Heart left ventricle (tissue), 16 donors: ENCODE measurements at regions of chr9 and their contacts with region 1.

Region 1: DNA sequence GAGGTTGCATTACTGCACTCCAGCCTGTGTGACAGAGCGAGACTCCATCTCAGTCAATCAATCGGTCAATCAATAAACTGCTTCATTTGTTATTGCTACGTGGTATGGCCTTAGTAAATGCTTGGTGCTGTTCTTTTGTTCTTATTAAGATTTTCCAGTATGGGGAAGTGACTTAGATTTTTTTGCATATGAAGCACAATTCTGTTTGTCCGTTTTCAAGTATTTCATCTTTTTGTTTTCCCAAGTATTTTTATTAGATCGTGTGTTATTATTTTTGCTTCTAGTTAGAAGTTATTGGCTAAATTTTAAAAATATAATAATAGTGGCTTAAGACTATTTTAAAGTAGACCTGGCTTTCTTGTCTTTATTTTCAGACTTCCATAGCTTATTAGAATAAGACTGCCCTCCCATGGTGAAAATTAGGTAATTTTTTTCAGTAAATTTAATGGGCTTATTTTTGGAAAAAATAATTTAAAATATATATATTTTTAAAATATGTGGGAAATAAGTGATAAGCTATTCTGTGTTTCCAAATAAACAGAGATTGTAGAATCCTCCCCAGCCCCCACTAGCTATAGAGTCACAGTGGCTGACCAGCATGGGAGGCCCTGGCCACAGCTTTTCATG is 14.7 kb upstream of the OMD start:
- DNase-seq: no peak
- ATAC-seq: no peak
- H3K4me3 ChIP-seq: peak overlapping the region in 1 of 12 donors; percentile 3
- H3K27ac ChIP-seq: no peak overlapping the region
- H3K4me1 ChIP-seq: peaks cover 0 to 7% (median 0%) of the 10 kb centered on the region in 12 donors
- H3K27me3 ChIP-seq: no peaks in the 10 kb centered on the region
- CTCF ChIP-seq: peak in 11 of 12 donors; percentile 18 to 57 (median 46)
- POLR2A ChIP-seq: no peak

Region 2: DNA sequence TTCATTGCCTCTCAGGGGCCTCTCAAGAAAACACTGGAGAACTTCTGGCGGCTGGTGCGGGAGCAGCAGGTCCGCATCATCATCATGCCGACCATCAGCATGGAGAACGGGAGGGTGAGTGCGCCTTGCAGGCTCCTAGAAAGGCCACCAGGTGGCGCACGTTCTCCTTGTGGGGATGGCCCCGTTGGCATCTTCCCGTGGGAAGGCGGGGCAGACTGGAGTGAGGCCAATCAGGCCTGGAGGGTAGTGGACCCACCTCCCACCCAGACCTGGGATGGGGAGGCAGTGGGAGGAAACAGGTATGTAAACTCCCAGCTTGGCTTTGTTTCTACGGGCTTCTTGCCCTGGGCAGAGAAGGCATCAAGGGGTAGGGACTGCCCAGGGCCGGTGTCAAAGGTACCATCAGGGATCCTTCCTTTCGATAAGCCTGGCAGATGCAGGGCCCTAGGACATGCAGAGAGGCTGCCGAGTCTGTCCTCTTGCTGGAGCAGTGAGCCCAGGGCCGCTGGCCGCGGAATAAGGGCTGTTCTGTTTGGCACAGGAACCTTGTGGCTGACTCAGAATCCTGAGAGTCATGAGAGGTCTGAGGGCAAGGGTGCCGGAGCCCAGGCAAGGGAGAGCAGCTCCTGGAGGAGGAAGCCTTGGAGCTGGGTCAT is 304.9 kb before region 1 on chr9:
- intact Hi-C with region 1: loop called in 3 of 10 experiments (anchors 5 to 10 kb)
- DNase-seq: peak; percentile 68 to 87 (median 78)
- ATAC-seq: peak; percentile 41 to 79 (median 74)
- H3K4me3 ChIP-seq: peak overlapping the region in 5 of 12 donors; percentile 4 to 18 (median 13)
- H3K27ac ChIP-seq: no peak overlapping the region
- H3K4me1 ChIP-seq: peaks cover 0 to 11% (median 0%) of the 10 kb centered on the region in 12 donors
- H3K27me3 ChIP-seq: peaks cover 0 to 10% (median 0%) of the 10 kb centered on the region in 9 donors
- CTCF ChIP-seq: peak; percentile 87 to 98 (median 93)
- POLR2A ChIP-seq: no peak

Region 3: DNA sequence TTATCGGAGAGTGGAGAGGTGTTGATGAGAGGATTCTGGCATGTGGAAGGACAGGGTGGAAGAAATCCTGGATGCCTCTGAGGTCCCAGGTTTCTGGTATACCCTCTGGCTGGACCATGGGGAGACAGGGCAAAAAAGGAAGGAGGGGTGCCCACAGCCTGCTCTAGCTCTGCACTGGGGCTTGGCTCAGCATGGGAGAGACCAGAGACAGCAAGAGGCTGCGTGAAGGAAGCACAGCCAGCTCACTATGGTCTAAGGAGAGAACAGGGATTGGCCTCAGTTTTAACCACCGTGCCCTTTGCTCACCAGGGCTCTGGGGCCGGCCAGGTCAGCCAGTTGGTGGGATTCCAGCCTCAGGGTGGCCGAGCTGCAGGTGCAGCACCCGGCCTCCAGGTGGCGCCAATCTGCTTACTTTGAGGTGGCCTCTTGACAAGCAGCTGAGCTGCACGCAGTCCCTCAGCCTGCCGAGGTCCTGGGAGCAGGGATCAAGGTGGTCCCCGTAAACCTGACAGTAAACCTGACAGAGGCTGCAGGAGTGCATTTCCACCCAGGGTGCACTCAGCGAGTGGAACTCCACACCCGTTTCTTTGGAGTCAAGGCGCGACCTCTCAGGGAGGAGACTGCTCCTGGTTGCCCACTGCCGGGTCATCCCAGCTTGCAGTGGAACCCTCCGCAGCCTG is 298.8 kb before region 1 on chr9:
- intact Hi-C with region 1: loop called in 5 of 10 experiments (anchors 5 to 10 kb)
- DNase-seq: peak; percentile 72 to 88 (median 74)
- ATAC-seq: peak; percentile 58 to 76 (median 71)
- H3K4me3 ChIP-seq: peak overlapping the region in 9 of 12 donors; percentile 12 to 60 (median 49)
- H3K27ac ChIP-seq: no peak overlapping the region
- H3K4me1 ChIP-seq: peaks cover 0 to 21% (median 8%) of the 10 kb centered on the region in 12 donors
- H3K27me3 ChIP-seq: peaks cover 4 to 17% (median 7%) of the 10 kb centered on the region in 9 donors
- CTCF ChIP-seq: peak; percentile 82 to 96 (median 92)
- POLR2A ChIP-seq: no peak

Region 4: DNA sequence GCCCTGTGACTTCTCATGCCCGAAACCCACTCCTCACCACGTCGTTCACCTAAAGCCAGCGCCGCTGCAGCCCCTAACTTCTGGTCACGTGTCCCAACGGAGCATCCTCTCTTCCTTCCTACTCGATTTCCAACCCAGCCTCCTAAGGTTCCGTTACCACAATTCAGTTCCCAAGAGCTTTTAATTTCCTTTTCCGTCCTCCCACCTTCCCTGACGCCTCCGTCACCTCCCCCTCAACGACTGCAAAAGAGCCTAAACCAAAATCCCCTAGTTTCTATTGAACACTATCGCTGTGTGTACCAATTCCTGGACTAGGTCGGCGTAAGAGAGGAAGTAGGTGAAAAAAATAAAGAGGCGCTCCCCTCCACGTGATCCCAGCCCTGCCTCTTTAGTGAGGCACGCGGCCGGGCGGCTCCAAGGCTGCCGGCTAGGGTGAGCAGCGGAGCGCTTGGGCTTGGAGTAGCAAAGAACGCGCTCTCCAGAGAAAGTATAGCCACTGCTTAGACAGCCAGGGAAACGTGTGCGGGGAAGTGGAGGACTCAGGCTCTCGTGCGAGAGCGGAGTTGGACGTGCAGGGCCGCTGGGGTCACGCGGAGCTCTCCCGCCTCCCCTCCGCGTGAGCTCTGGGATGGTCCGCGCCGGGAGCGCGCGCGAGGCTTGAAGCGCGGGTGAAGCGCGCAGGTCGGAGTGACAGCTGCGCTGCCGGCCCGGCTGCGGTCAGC is 113.6 kb before region 1 on chr9 and contains the starts of genes CENPP and NOL8:
- intact Hi-C with region 1: loop called in 2 of 10 experiments (anchors 10 kb)
- DNase-seq: peak; percentile 86 to 91 (median 87)
- ATAC-seq: peak; percentile 98 to 99 (median 98)
- H3K4me3 ChIP-seq: peak within 1 kb of the TSS; percentile 53 to 90 (median 80)
- H3K27ac ChIP-seq: peak within 1 kb of the TSS; percentile 86 to 99 (median 96)
- H3K4me1 ChIP-seq: peaks cover 0 to 31% (median 16%) of the 10 kb centered on the region in 12 donors
- H3K27me3 ChIP-seq: no peaks in the 10 kb centered on the region
- CTCF ChIP-seq: no peak
- POLR2A ChIP-seq: no peak
- total RNA-seq, gene CENPP: 1.2 to 5.8 (median 3.1) TPM
- total RNA-seq, gene NOL8: 8.1 to 25.6 (median 18.1) TPM

Region 5: GRCh38 chr9:92332577-92333281 is 106.3 kb before region 1 on chr9:
- intact Hi-C with region 1: loop called in 3 of 10 experiments (anchors 5 to 10 kb)
- DNase-seq: peak in 3 of 5 donors; percentile 10 to 38 (median 26)
- ATAC-seq: peak; percentile 62 to 89 (median 78)
- H3K4me3 ChIP-seq: no peak overlapping the region
- H3K27ac ChIP-seq: peak overlapping the region in 10 of 12 donors; percentile 18 to 82 (median 48)
- H3K4me1 ChIP-seq: peaks cover 0 to 15% (median 0%) of the 10 kb centered on the region in 12 donors
- H3K27me3 ChIP-seq: no peaks in the 10 kb centered on the region
- CTCF ChIP-seq: no peak
- POLR2A ChIP-seq: no peak

Region 6: GRCh38 chr9:92342825-92343488 is 96.1 kb before region 1 on chr9:
- intact Hi-C with region 1: loop called in 7 of 10 experiments (anchors 5 to 10 kb)
- DNase-seq: no peak
- ATAC-seq: no peak
- H3K4me3 ChIP-seq: no peak overlapping the region
- H3K27ac ChIP-seq: peak overlapping the region in 2 of 12 donors; percentile 0 to 6
- H3K4me1 ChIP-seq: peaks cover 0 to 8% (median 0%) of the 10 kb centered on the region in 12 donors
- H3K27me3 ChIP-seq: no peaks in the 10 kb centered on the region
- CTCF ChIP-seq: peak in 9 of 12 donors; percentile 20 to 57 (median 37)
- POLR2A ChIP-seq: no peak

Region 7: DNA sequence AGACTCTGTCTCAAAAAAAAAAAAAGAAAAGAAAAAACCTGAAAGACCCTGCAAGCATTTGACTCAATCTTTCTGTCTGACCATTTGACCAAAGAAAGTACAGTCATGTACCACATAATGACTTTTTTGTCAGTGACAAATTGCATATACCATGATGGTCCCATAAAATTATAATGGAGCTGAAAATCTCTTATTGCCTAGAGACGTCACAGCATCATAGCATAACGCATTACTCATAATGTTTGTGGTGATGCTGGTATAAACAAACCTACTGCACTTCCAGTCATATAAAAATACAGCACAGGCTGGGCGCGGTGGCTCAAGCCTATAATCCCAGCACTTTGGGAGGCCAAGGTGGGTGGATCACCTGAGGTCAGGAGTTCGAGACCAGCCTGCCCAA is 86.3 kb after region 1 on chr9:
- intact Hi-C with region 1: loop called in 1 of 10 experiments (anchors 10 kb)
- DNase-seq: no peak
- ATAC-seq: no peak
- H3K4me3 ChIP-seq: no peak overlapping the region
- H3K27ac ChIP-seq: no peak overlapping the region
- H3K4me1 ChIP-seq: peaks cover 0 to 18% (median 0%) of the 10 kb centered on the region in 12 donors
- H3K27me3 ChIP-seq: no peaks in the 10 kb centered on the region
- CTCF ChIP-seq: no peak
- POLR2A ChIP-seq: no peak